ENCODE measurements at regions of chr12 and their contacts with region 1.

Region 1: GRCh38 chr12:105235732-105236476 is at the start of gene APPL2:
- DNase-seq: peak; percentile 79
- ATAC-seq: peak; percentile 82
- H3K4me3 Mint-ChIP-seq: peak within 1 kb of the TSS; percentile 88
- H3K27ac Mint-ChIP-seq: peak within 1 kb of the TSS; percentile 91
- H3K4me1 Mint-ChIP-seq: peaks cover 39% of the 10 kb centered on the region
- H3K27me3 Mint-ChIP-seq: no peaks in the 10 kb centered on the region
- CTCF ChIP-seq: no peak
- total RNA-seq, gene APPL2: 22.0 and 30.7 TPM in 2 replicates

Region 2: GRCh38 chr12:104137913-104138796 is 1097.7 kb before region 1 on chr12 and contains the start of gene NFYB:
- CTCF ChIA-PET with region 1: no interaction called
- POLR2A ChIA-PET with region 1: interaction called, 7 read pairs
- intact Hi-C with region 1: loop called (anchors 1 kb)
- DNase-seq: peak; percentile 90
- ATAC-seq: peak; percentile 94
- H3K4me3 Mint-ChIP-seq: peak within 1 kb of the TSS; percentile 89
- H3K27ac Mint-ChIP-seq: peak within 1 kb of the TSS; percentile 85
- H3K4me1 Mint-ChIP-seq: peaks cover 21% of the 10 kb centered on the region
- H3K27me3 Mint-ChIP-seq: no peaks in the 10 kb centered on the region
- CTCF ChIP-seq: no peak
- total RNA-seq, gene NFYB: 17.0 and 17.1 TPM in 2 replicates

Region 3: DNA sequence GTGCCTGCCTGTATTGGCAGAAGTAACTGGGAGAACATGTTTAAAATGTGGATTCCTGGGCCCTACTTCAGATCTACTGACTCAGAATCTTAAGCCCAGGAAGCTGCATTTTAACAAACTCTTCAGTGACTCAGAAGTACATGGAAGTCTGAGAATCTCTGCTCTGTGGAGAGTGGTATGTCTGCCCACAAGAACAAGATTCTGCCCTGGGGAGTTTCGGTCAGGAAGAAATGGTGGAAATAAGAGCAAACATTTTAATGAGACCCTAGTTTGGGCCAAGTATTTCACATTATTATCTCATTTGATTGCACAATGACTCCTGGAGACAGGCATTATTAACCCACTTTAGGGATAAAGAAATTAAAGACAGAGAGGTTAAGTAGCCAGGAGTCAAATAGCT is 159.8 kb before region 1 on chr12:
- CTCF ChIA-PET with region 1: no interaction called
- POLR2A ChIA-PET with region 1: no interaction called
- intact Hi-C with region 1: no loop called
- DNase-seq: no peak
- ATAC-seq: no peak
- H3K4me3 Mint-ChIP-seq: no peak overlapping the region
- H3K27ac Mint-ChIP-seq: no peak overlapping the region
- H3K4me1 Mint-ChIP-seq: peaks cover 1% of the 10 kb centered on the region
- H3K27me3 Mint-ChIP-seq: no peaks in the 10 kb centered on the region
- CTCF ChIP-seq: no peak

Region 4: GRCh38 chr12:105279460-105280056 is 43.7 kb after region 1 on chr12:
- CTCF ChIA-PET with region 1: no interaction called
- POLR2A ChIA-PET with region 1: no interaction called
- intact Hi-C with region 1: loop called (anchors 2 kb)
- DNase-seq: no peak
- ATAC-seq: peak; percentile 54
- H3K4me3 Mint-ChIP-seq: no peak overlapping the region
- H3K27ac Mint-ChIP-seq: no peak overlapping the region
- H3K4me1 Mint-ChIP-seq: no peaks in the 10 kb centered on the region
- H3K27me3 Mint-ChIP-seq: peaks cover 3% of the 10 kb centered on the region
- CTCF ChIP-seq: no peak

Region 5: DNA sequence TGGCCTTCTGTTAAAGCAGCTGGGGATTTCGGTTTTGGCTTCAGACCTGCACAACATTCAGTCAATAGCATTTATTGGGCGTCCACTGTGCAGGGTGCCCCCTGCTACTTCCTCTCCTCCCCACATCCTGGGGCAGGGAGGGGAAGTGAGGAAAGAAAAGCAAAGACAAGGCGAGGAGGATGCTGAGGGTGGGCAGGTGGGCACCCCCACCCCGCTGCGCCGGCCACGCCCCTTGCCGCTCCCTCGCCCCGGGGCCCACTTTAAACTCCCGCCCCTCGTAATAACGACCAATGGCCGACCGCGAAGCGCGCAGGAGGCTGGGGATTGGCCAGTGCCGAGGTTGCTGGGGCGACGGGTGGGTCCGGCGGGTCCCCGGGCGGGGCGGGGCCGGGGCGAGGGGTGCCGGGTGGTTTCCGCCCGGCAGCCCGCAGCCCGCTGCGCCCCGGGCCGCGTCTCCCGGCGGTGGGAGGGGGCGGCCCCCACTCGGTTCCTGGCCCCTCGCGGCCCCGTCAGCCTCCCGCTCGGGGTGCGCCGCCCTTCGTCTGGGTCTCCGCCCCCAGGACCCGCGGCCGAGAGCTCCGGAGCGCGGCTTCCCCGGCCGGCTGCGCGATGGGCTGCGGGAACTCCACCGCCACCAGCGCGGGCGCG is 94.5 kb after region 1 on chr12 and contains the start of gene C12orf75:
- CTCF ChIA-PET with region 1: no interaction called
- POLR2A ChIA-PET with region 1: interaction called, 3 read pairs
- intact Hi-C with region 1: loop called (anchors 1 kb)
- DNase-seq: peak; percentile 82
- ATAC-seq: peak; percentile 94
- H3K4me3 Mint-ChIP-seq: peak within 1 kb of the TSS; percentile 86
- H3K27ac Mint-ChIP-seq: peak within 1 kb of the TSS; percentile 76
- H3K4me1 Mint-ChIP-seq: peaks cover 47% of the 10 kb centered on the region
- H3K27me3 Mint-ChIP-seq: no peaks in the 10 kb centered on the region
- CTCF ChIP-seq: no peak
- total RNA-seq, gene C12orf75: 37.1 and 40.8 TPM in 2 replicates

Measured in activated B cell treated with CpG ODN at 0.5 μM for 24 hours (primary cell).